ACHN (cell line): ENCODE measurements at regions of chr15 and their contacts with region 1.

Region 1: DNA sequence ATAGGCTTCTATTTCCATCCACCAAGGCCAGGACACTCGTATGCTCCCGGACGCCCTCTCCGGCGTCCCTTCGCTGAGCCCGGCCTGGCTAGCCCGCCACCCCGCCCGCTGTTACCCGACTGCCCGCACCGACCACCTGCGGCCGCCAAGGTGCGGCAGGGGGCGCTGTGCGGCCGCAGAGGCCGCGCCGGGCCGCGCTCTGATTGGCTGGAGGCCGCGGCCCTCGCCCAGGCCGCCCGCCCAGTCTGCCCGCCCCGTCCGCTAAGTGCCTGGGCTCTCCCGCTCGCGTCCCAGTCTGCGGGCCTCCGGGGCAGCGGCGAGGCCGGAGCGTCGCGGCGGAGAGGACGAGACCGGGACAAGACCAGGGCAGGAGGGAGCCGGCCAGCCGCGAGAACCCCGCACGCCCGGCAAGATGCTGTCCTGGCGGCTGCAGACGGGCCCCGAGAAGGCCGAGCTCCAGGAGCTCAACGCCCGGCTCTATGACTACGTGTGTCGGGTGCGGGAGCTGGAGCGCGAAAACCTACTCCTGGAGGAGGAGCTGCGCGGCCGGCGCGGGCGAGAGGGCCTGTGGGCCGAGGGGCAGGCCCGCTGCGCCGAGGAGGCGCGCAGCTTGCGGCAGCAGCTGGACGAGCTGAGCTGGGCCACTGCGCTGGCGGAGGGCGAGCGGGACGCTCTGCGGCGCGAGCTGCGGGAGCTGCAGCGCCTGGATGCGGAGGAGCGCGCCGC is at the start of gene SYNM:
- DNase-seq: peak; percentile 79

Region 2: GRCh38 chr15:98968576-98968975 is 136.4 kb before region 1 on chr15:
- in situ Hi-C with region 1: no loop called
- DNase-seq: no peak

Region 3: GRCh38 chr15:99207672-99208071 is 102.7 kb after region 1 on chr15:
- in situ Hi-C with region 1: loop called (anchors 10 kb)
- DNase-seq: no peak